Heart left ventricle (tissue), 16 donors: ENCODE measurements at regions of chr11 and their contacts with region 1.

Region 1: DNA sequence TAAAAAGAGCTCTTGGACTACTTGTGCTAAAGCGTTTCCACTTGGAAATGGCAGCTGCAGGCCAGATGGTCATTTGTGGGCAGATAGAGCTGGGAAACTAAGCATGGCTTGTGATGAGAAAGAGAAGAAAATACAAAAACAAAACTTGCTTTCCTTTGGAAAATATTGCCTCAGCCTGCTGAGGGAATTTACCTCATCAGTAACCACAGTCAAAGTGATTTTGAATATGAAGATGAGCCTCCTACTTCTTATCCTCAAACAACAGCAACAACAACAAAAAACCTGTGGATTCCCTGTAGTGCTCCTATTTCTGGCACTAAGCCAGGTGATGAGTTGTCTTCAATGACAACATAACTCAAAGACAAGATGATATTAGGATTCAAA is 62.7 kb upstream of the FIBIN start:
- DNase-seq: peak; percentile 38 to 55 (median 46)
- ATAC-seq: peak; percentile 33 to 86 (median 80)
- H3K4me3 ChIP-seq: no peak overlapping the region
- H3K27ac ChIP-seq: peak overlapping the region in 8 of 12 donors; percentile 20 to 75 (median 51)
- H3K4me1 ChIP-seq: peaks cover 0 to 17% (median 0%) of the 10 kb centered on the region in 12 donors
- H3K27me3 ChIP-seq: no peaks in the 10 kb centered on the region
- CTCF ChIP-seq: no peak
- POLR2A ChIP-seq: no peak

Region 2: GRCh38 chr11:26730414-26731080 is 200.7 kb before region 1 on chr11:
- intact Hi-C with region 1: no loop called
- DNase-seq: no peak
- ATAC-seq: peak; percentile 78 to 98 (median 94)
- H3K4me3 ChIP-seq: no peak overlapping the region
- H3K27ac ChIP-seq: no peak overlapping the region
- H3K4me1 ChIP-seq: peaks cover 0 to 9% (median 0%) of the 10 kb centered on the region in 12 donors
- H3K27me3 ChIP-seq: no peaks in the 10 kb centered on the region
- CTCF ChIP-seq: no peak
- POLR2A ChIP-seq: no peak

Region 3: DNA sequence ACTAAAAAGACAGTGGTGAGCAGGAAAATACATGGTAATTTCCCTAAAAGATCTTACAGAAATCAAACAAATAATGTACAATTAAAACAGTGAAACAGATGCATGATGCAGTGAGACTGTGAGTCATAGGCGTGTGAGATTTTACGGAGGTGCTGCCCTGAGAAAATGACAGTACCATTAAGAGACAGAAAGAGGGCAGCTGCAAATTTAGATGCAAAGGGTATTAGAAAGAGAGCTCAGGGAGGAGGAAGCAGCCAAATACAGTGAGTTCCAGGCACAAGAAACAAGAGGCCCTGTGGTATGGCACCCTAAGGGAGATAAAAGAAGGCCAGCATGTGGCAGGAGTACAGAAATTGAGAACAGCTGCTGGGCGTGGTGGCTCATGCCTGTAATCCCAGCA is 25.9 kb before region 1 on chr11:
- intact Hi-C with region 1: loop called in 1 of 10 experiments (anchors 2 kb)
- DNase-seq: no peak
- ATAC-seq: peak in 1 of 4 donors; percentile 52
- H3K4me3 ChIP-seq: no peak overlapping the region
- H3K27ac ChIP-seq: no peak overlapping the region
- H3K4me1 ChIP-seq: peaks cover 0 to 6% (median 0%) of the 10 kb centered on the region in 12 donors
- H3K27me3 ChIP-seq: no peaks in the 10 kb centered on the region
- CTCF ChIP-seq: no peak
- POLR2A ChIP-seq: no peak

Region 4: GRCh38 chr11:26985943-26986342 is 54.7 kb after region 1 on chr11:
- intact Hi-C with region 1: no loop called
- DNase-seq: no peak
- ATAC-seq: peak; percentile 42 to 88 (median 58)
- H3K4me3 ChIP-seq: no peak overlapping the region
- H3K27ac ChIP-seq: peak overlapping the region in 5 of 12 donors; percentile 41 to 60 (median 47)
- H3K4me1 ChIP-seq: peaks cover 0 to 19% (median 0%) of the 10 kb centered on the region in 12 donors
- H3K27me3 ChIP-seq: no peaks in the 10 kb centered on the region
- CTCF ChIP-seq: no peak
- POLR2A ChIP-seq: no peak

Region 5: DNA sequence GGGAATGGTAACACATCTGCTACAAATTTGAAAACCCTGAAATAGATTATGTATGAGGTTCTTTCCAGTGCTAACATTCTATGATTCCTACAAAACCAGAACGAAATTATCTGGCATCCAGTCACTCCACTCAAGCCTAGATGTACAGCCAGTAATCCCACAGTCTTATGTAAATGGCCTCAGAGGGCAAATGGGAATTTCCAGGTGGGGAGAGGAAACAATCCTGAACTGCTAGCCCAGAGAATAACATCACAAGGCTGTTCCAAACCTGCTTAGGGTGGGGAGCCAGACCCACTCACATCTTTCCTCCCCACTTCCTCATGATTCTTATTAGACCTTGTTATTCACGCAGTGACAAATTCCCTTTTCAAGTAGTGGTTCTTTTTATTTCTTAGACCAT is 66.1 kb after region 1 on chr11:
- intact Hi-C with region 1: no loop called
- DNase-seq: no peak
- ATAC-seq: peak in 1 of 4 donors; percentile 15
- H3K4me3 ChIP-seq: peak overlapping the region in 7 of 12 donors; percentile 47 to 70 (median 62)
- H3K27ac ChIP-seq: peak overlapping the region in 3 of 12 donors; percentile 22 to 56 (median 53)
- H3K4me1 ChIP-seq: peaks cover 0 to 6% (median 0%) of the 10 kb centered on the region in 12 donors
- H3K27me3 ChIP-seq: peaks cover 0 to 8% (median 0%) of the 10 kb centered on the region in 9 donors
- CTCF ChIP-seq: no peak
- POLR2A ChIP-seq: no peak

Region 6: GRCh38 chr11:27370374-27370773 is 439.1 kb after region 1 on chr11:
- intact Hi-C with region 1: no loop called
- DNase-seq: no peak
- ATAC-seq: no peak
- H3K4me3 ChIP-seq: no peak overlapping the region
- H3K27ac ChIP-seq: no peak overlapping the region
- H3K4me1 ChIP-seq: no peaks in the 10 kb centered on the region
- H3K27me3 ChIP-seq: no peaks in the 10 kb centered on the region
- CTCF ChIP-seq: no peak
- POLR2A ChIP-seq: no peak